ENCODE measurements at regions of chr1 and their contacts with region 1.

Region 1: GRCh38 chr1:111656086-111657017 is 36.8 kb downstream of the RAP1A start:
- DNase-seq: no peak
- H3K4me3 ChIP-seq: no peak overlapping the region
- H3K27ac ChIP-seq: peak overlapping the region; percentile 12 to 59 (median 38)
- H3K4me1 ChIP-seq: peaks cover 0 to 92% (median 55%) of the 10 kb centered on the region in 4 donors
- H3K27me3 ChIP-seq: no peaks in the 10 kb centered on the region
- CTCF ChIP-seq: peak; percentile 52 to 63 (median 57)
- EP300 ChIP-seq: no peak
- POLR2A ChIP-seq: no peak

Region 2: GRCh38 chr1:111454859-111455641 is 201.3 kb before region 1 on chr1:
- intact Hi-C with region 1: no loop called
- DNase-seq: no peak
- H3K4me3 ChIP-seq: no peak overlapping the region
- H3K27ac ChIP-seq: no peak overlapping the region
- H3K4me1 ChIP-seq: peaks cover 0 to 57% (median 44%) of the 10 kb centered on the region in 4 donors
- H3K27me3 ChIP-seq: no peaks in the 10 kb centered on the region
- CTCF ChIP-seq: no peak
- EP300 ChIP-seq: no peak
- POLR2A ChIP-seq: no peak

Region 3: DNA sequence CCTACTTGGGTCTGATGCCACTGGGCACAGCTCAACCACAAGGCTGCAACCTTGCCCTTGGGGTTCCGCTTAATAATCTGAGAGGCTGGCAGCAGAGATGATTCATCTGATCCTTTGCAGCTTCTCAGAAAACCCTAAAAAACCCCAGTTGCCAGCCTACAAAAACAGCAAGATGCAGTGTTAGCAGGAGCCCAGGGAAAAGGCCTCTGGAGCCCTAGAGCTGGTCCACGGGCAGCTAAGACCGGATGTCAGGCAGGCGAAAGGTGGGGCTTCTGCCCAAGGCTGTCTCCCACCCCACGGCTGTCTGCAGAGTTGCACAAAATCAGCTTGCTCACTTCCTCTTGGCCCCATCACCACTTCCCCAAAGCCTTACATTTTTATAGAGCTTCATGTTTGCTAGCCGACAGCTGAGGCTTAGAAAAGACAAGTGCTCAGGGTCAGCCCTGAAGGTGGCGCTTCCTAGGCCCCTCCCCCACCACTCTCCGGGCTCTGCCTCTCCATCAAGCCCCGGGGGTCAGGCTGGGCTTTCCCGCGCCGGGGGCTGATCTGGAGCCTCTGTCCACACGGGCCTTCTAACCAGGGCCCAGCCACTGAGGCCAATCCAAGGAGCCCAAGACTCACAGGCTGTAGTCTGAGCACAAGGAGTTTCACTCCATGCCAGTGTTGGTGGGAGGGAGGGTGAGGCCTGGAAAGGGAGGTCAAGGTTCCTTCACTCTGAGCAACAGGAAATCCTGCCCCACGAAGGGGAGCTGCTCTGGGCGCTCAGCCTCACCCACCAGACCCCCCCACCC is 148.7 kb before region 1 on chr1:
- intact Hi-C with region 1: loop called (anchors 1 kb)
- DNase-seq: peak; percentile 89
- H3K4me3 ChIP-seq: peak overlapping the region in 3 of 4 donors; percentile 26 to 31 (median 30)
- H3K27ac ChIP-seq: peak overlapping the region; percentile 91 to 95 (median 94)
- H3K4me1 ChIP-seq: peaks cover 0 to 74% (median 60%) of the 10 kb centered on the region in 4 donors
- H3K27me3 ChIP-seq: no peaks in the 10 kb centered on the region
- CTCF ChIP-seq: no peak
- EP300 ChIP-seq: no peak
- POLR2A ChIP-seq: no peak

Region 4: DNA sequence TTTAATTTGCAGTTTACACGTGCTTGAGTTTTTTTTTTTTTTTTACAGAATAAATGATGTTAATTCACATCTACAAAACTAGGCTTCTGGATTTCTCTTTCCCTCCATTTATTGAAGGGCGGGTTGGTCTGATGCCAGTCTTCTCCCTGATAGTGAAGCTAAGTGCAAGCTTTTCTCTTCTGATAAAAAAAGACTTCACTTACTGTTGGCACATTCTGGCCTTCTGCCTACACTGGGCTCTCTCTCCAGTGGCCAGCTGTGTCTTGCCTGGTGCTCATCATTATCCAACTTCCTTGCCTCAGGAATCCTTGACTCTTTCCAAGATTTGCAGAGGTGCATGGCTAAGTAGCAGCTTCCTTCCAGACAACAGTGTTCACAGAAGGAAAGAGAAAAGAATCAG is 44.4 kb before region 1 on chr1:
- intact Hi-C with region 1: loop called (anchors 5 kb)
- DNase-seq: peak; percentile 76
- H3K4me3 ChIP-seq: no peak overlapping the region
- H3K27ac ChIP-seq: peak overlapping the region; percentile 55 to 83 (median 74)
- H3K4me1 ChIP-seq: peaks cover 2 to 78% (median 50%) of the 10 kb centered on the region in 4 donors
- H3K27me3 ChIP-seq: no peaks in the 10 kb centered on the region
- CTCF ChIP-seq: no peak
- EP300 ChIP-seq: no peak
- POLR2A ChIP-seq: no peak

Region 5: GRCh38 chr1:111739194-111739924 is 83.0 kb after region 1 on chr1 and contains the start of gene INKA2:
- intact Hi-C with region 1: loop called (anchors 5 kb)
- DNase-seq: peak; percentile 96
- H3K4me3 ChIP-seq: peak within 1 kb of the TSS; percentile 56 to 67 (median 62)
- H3K27ac ChIP-seq: peak within 1 kb of the TSS; percentile 87 to 97 (median 90)
- H3K4me1 ChIP-seq: peaks cover 0 to 62% (median 46%) of the 10 kb centered on the region in 4 donors
- H3K27me3 ChIP-seq: no peaks in the 10 kb centered on the region
- CTCF ChIP-seq: no peak
- EP300 ChIP-seq: no peak
- POLR2A ChIP-seq: peak; percentile 69 to 70
- total RNA-seq, gene INKA2: 2.8 to 5.4 (median 4.4) TPM